Activated CD8-positive, alpha-beta T cell treated with anti-CD3 and anti-CD28 coated beads for 36 hours (primary cell): ENCODE measurements at regions of chr5 and their contacts with region 1.

Region 1: DNA sequence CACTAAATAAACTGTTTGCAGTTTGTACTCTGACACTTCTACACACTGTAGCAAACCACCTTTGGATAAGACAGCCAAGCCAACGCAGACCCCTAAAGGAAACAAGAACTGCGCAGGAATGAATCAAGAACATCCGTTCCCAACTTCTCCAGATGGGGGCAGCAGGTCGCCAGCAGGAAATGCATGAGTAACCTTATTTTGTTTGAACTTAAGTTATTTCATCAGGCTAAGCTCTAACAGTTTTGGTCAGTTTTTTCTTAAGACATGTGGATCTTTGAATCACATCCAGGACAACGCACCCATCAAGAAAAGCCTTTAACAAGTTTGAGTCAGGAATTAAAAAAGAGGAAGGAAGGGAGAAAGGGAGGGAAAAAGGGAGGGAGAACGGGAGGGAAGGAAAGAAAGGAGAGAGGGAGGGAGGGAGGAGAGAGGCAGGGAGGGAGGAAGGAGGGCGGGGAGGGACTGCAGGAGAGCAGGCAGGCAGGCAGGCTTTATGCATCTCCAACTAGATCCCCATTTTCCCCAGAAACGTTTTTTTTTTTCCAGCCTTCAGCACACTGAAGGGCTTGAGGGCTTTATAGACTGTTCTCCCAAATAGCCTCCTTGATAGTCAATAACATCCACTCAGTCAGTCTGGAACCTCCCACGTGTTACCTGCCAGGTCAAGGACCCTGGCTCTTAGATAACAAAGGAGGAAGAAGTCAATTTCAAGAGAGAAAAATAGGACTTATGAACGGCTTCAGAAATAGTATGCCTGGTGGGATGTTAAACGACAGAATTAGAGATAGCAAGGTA is 22.2 kb downstream of the BHMT start:
- DNase-seq: peak; percentile 90
- ATAC-seq: peak; percentile 93
- H3K4me3 Mint-ChIP-seq: peak overlapping the region; percentile 61
- H3K27ac Mint-ChIP-seq: peak overlapping the region; percentile 88
- H3K4me1 Mint-ChIP-seq: peaks cover 22% of the 10 kb centered on the region
- H3K27me3 Mint-ChIP-seq: peaks cover 3% of the 10 kb centered on the region
- CTCF ChIP-seq: no peak

Region 2: GRCh38 chr5:78984439-78985115 is 149.3 kb before region 1 on chr5:
- CTCF ChIA-PET with region 1: interaction called, 22 read pairs
- POLR2A ChIA-PET with region 1: no interaction called
- intact Hi-C with region 1: no loop called
- DNase-seq: peak; percentile 79
- ATAC-seq: peak; percentile 52
- H3K4me3 Mint-ChIP-seq: peak overlapping the region; percentile 85
- H3K27ac Mint-ChIP-seq: peak overlapping the region; percentile 92
- H3K4me1 Mint-ChIP-seq: peaks cover 45% of the 10 kb centered on the region
- H3K27me3 Mint-ChIP-seq: no peaks in the 10 kb centered on the region
- CTCF ChIP-seq: no peak

Region 3: GRCh38 chr5:79030663-79031484 is 103.0 kb before region 1 on chr5:
- CTCF ChIA-PET with region 1: interaction called, 384 read pairs
- POLR2A ChIA-PET with region 1: no interaction called
- intact Hi-C with region 1: no loop called
- DNase-seq: no peak
- ATAC-seq: no peak
- H3K4me3 Mint-ChIP-seq: no peak overlapping the region
- H3K27ac Mint-ChIP-seq: no peak overlapping the region
- H3K4me1 Mint-ChIP-seq: no peaks in the 10 kb centered on the region
- H3K27me3 Mint-ChIP-seq: peaks cover 8% of the 10 kb centered on the region
- CTCF ChIP-seq: no peak

Region 4: DNA sequence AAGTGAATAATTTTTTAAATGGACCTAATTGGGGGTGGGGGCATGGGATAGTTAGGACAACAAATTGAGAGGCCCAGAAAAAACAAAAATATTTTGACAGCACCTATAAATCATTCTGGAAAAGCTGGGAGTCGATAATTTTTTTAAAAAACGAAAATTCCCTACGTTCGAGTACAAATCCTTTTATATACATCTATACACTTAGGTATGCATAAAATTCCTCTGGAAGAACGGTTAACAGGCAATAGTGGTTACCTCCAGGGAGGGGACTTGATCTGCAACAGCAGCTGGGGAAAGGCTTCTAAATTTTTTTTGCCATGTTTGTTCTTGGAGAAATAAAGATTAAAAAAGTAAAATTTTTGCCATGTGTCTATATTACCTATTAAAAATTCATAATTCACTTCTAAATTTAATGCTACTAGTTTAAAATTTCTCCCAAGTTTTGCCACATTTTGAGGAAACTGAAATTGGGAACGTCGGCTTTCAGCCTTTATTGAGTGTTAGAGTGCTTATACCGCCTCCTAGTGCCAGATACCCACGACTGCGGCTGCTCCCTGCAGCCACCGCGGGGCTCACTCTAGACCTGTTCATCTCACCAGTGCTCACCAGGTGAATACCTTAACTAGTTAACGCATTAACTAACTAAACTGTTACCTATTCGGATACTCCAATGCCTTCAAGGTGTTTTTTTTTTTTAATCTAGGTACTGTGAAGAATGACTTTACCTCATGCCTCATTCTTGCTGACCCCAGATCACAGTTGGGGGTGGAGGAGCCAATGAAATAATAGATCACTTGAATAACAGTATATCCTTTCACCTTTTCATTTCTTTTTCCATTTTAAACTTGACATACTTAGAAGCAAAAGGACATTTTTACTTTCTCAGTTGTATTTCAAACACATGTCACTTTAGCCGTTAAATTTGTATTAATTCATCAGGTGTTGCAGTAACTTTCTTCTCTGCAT is 24.0 kb before region 1 on chr5:
- CTCF ChIA-PET with region 1: interaction called, 13 read pairs
- POLR2A ChIA-PET with region 1: no interaction called
- intact Hi-C with region 1: no loop called
- DNase-seq: peak; percentile 68
- ATAC-seq: peak; percentile 75
- H3K4me3 Mint-ChIP-seq: no peak overlapping the region
- H3K27ac Mint-ChIP-seq: no peak overlapping the region
- H3K4me1 Mint-ChIP-seq: no peaks in the 10 kb centered on the region
- H3K27me3 Mint-ChIP-seq: peaks cover 36% of the 10 kb centered on the region
- CTCF ChIP-seq: peak; percentile 85

Region 5: DNA sequence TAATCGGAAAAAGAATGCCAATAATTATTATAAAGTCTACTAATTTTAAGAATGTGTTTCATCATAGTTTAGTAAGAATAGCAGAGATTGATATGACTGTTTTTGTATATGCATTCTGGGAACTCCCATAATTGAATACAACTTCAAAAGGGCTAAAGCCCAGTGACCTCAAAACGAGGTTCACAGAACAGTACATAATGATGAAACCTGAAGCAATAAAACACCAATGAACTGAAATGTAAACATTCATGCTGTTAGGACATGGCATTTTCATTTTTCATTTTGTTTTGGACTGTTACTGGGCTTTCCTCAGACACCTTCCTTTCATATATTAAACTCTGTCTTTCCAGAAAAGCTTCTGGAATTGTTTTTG is 101.4 kb after region 1 on chr5:
- CTCF ChIA-PET with region 1: interaction called, 10 read pairs
- POLR2A ChIA-PET with region 1: interaction called, 3 read pairs
- intact Hi-C with region 1: no loop called
- DNase-seq: no peak
- ATAC-seq: peak; percentile 22
- H3K4me3 Mint-ChIP-seq: peak overlapping the region; percentile 98
- H3K27ac Mint-ChIP-seq: peak overlapping the region; percentile 97
- H3K4me1 Mint-ChIP-seq: peaks cover 16% of the 10 kb centered on the region
- H3K27me3 Mint-ChIP-seq: no peaks in the 10 kb centered on the region
- CTCF ChIP-seq: no peak